AG04449 (cell line): ENCODE measurements at regions of chrX and their contacts with region 1.

Region 1: DNA sequence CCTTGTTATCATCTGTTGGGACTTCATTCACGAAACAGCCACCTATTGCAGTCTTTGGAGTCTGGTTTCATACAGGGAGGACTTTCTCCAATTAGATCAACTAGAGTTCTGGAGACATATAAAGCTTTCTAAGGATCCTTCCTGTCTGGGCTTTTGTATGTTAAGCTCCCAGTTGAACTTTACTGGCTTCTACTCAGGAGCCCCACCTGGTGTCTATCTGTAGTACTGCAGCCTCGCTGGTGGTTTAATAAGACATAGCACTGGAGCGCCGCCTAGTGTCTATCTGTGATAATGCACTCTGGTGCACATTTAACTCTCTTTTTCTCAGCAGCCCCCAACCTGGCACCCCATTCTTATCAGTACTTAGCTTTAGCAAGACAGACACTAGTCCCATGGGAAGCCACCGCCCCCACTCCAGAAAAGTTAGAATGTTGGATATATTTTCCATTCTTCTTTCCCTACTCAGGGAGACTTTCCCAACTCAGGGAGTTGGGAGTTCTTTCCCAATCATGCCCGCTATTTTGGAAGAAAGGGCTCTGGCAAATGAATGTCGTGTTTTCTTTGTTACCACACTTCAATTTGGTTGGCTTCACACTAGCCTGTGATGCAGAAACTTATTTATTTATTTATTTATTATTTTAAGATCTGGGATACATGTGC is 36.9 kb upstream of the SYTL4 start:
- DNase-seq: peak; percentile 0
- H3K4me3 ChIP-seq: no peak overlapping the region
- CTCF ChIP-seq: peak; percentile 78

Region 2: GRCh38 chrX:100649550-100650356 is 119.1 kb before region 1 on chrX:
- CTCF ChIA-PET with region 1: interaction called, 15 read pairs
- POLR2A ChIA-PET with region 1: no interaction called
- DNase-seq: peak; percentile 72
- H3K4me3 ChIP-seq: no peak overlapping the region
- CTCF ChIP-seq: no peak

Region 3: GRCh38 chrX:100674705-100675104 is 94.1 kb before region 1 on chrX:
- CTCF ChIA-PET with region 1: interaction called, 150 read pairs
- POLR2A ChIA-PET with region 1: no interaction called
- DNase-seq: no peak
- H3K4me3 ChIP-seq: no peak overlapping the region
- CTCF ChIP-seq: no peak

Region 4: GRCh38 chrX:100695302-100695701 is 73.5 kb before region 1 on chrX:
- CTCF ChIA-PET with region 1: interaction called, 26 read pairs
- POLR2A ChIA-PET with region 1: no interaction called
- DNase-seq: no peak
- H3K4me3 ChIP-seq: no peak overlapping the region
- CTCF ChIP-seq: no peak

Region 5: DNA sequence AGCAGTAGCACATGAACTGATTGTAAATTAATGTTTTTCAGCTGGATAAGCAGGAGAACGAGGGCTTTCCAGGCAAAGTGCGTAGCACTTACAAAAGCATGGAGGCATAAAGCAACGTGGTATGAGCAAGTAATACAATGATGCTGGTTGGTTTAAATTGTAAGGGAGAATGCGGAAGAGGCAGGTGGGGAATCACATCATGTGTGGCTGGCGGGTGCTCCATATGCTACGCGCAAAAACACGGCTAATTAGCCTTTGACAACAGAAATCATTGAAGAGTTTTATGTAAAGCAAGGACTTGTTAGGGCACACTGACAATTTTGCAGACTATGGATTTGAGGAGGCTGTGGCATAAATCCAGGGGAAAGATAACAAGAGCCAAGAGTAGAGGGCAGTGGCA is 51.4 kb before region 1 on chrX:
- CTCF ChIA-PET with region 1: interaction called, 12 read pairs
- POLR2A ChIA-PET with region 1: no interaction called
- DNase-seq: no peak
- H3K4me3 ChIP-seq: no peak overlapping the region
- CTCF ChIP-seq: no peak

Region 6: DNA sequence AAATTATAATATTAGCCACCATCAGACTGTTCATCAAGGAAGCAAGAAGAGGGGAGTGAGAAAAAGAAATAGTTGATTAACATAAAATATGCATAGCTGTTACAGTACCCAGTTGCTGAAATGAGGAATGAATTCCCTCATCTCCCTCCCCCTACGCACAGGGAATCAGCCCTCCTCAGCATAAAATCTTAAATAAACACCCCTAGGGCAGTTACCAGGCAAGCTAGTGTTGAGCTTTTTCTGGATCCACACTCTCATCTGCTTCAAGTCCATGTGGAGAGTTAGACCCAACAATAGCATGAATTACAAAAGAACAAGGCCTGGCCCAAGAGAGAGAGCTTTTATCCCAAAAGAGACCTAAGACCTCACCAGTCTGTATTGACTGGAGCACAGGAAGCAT is 17.9 kb before region 1 on chrX:
- CTCF ChIA-PET with region 1: interaction called, 12 read pairs
- POLR2A ChIA-PET with region 1: no interaction called
- DNase-seq: no peak
- H3K4me3 ChIP-seq: no peak overlapping the region
- CTCF ChIP-seq: no peak

Region 7: GRCh38 chrX:101078716-101079598 is 310.1 kb after region 1 on chrX and contains the start of gene TMEM35A:
- CTCF ChIA-PET with region 1: no interaction called
- POLR2A ChIA-PET with region 1: no interaction called
- DNase-seq: no peak
- H3K4me3 ChIP-seq: peak within 1 kb of the TSS; percentile 56
- CTCF ChIP-seq: no peak